OCI-LY7 (cell line): ENCODE measurements at regions of chr6 and their contacts with region 1.

Region 1: GRCh38 chr6:32838114-32838958 is at the start of gene TAP2:
- DNase-seq: peak; percentile 96
- H3K4me3 ChIP-seq: peak within 1 kb of the TSS; percentile 97
- H3K27ac ChIP-seq: peak within 1 kb of the TSS; percentile 67
- H3K4me1 ChIP-seq: peaks cover 55% of the 10 kb centered on the region
- CTCF ChIP-seq: peak; percentile 95
- total RNA-seq, gene TAP2: 90.9 and 96.4 TPM in 2 replicates

Region 2: DNA sequence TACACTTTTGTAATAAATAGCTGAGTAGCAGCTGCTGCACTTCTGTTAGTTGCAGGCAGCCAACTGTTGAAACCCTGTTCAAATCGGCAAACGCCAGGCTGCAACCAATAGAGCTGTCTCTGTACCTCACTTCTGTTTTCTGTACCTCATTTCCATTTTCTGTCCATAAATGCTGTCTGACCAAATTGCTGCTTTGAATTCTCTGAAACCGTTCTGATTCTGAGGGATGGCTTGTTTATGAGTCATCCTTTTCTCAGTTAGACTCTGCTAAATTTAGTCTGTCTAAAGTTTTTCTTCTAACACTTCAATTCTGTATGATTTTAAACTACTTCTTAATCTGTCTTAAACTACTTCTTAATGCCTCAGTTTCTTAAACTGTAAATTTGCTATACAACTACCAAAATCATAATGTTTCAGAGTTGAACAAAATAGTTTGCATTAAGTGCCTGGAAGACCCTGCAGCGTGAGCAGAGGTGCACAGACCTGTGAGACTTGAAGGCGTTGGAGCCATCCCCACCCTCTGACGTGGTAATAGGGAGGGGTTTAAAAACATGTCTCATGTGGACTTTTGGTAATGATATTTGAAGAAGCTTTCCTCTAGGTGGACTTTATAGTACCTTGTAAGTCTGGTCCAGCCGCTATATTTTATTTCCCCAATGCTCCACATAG is 440.9 kb before region 1 on chr6:
- CTCF ChIA-PET with region 1: no interaction called
- POLR2A ChIA-PET with region 1: interaction called, 10 read pairs
- intact Hi-C with region 1: no loop called
- DNase-seq: peak; percentile 80
- H3K4me3 ChIP-seq: peak overlapping the region; percentile 22
- H3K27ac ChIP-seq: peak overlapping the region; percentile 86
- H3K4me1 ChIP-seq: peaks cover 66% of the 10 kb centered on the region
- CTCF ChIP-seq: no peak

Region 3: DNA sequence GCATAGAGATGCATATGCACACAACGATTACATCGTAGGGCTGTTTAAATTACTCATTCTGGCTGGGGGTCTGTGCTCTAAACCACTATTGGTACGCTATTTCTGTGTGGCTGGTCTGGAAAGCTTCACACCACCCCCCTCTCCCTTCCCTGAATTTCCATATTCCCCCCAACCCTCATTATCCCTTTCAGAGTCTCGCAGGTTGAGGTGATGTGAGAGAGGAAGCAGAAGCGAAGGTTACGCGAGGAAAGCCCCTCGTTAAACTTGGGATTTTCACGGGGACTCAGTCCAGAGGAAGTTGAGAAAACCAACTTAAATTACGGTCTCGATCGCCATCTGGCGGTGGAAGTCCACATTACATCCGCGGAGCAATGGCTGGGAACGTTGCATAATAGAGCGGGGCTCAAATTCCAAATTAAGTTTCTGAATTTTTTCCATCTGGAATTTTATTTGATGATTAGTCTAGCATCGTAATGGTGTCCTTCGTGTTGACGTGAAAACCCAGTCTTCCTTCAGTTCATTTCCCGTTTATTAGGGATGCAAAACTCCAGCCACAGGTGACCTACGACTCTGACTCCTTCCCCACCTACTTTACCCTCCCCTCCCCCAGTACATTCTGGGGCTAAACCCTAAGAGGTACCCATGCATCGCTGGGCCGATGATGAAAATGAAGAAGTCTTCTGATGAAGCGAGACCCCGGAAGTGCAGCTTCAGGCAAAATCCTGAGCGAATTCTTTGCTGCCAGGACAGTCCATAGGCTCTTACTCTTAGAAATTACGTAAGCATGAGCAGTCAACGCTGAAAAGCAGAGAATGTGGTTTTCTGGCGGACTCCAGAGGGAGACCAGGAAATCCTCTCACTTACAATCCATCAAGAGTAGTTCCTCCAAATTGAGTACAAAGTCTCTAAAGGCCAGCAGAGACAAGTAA is 41.2 kb before region 1 on chr6:
- CTCF ChIA-PET with region 1: no interaction called
- POLR2A ChIA-PET with region 1: interaction called, 8 read pairs
- intact Hi-C with region 1: loop called (anchors 1 kb)
- DNase-seq: peak; percentile 85
- H3K4me3 ChIP-seq: peak overlapping the region; percentile 44
- H3K27ac ChIP-seq: peak overlapping the region; percentile 57
- H3K4me1 ChIP-seq: peaks cover 34% of the 10 kb centered on the region
- CTCF ChIP-seq: peak; percentile 97

Region 4: DNA sequence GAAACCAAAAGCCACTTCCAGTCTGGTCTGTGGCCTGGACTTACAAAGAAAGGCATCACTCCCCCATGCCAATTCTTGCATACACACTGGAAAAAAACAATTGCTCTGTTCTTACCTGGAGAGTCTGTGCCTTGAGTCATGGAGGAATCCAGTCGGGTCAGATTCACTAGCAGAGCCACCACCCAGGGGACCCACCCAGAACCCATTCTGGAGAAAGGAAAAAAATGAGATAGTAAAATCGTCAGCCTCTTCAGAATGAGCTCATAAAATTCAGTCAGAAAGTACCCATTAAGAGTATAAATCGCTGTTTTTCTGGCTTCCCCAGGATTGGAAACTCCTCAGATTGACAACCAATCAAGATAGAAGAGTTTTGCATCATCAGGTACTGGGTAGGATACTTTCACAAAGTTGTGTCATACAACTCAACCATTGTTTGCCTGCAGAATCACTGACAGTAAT is 21.6 kb before region 1 on chr6 and contains the start of gene HLA-DOB:
- CTCF ChIA-PET with region 1: no interaction called
- POLR2A ChIA-PET with region 1: interaction called, 11 read pairs
- intact Hi-C with region 1: no loop called
- DNase-seq: peak; percentile 86
- H3K4me3 ChIP-seq: peak within 1 kb of the TSS; percentile 69
- H3K27ac ChIP-seq: peak within 1 kb of the TSS; percentile 97
- H3K4me1 ChIP-seq: peaks cover 92% of the 10 kb centered on the region
- CTCF ChIP-seq: no peak
- total RNA-seq, gene HLA-DOB: 46.5 and 48.1 TPM in 2 replicates

Region 5: GRCh38 chr6:32853541-32854375 is 15.4 kb after region 1 on chr6 and contains the starts of genes PSMB9 and TAP1:
- CTCF ChIA-PET with region 1: interaction called, 17 read pairs
- POLR2A ChIA-PET with region 1: interaction called, 88 read pairs
- intact Hi-C with region 1: loop called (anchors 1 kb)
- DNase-seq: peak; percentile 94
- H3K4me3 ChIP-seq: peak within 1 kb of the TSS; percentile 83
- H3K27ac ChIP-seq: peak within 1 kb of the TSS; percentile 83
- H3K4me1 ChIP-seq: peaks cover 58% of the 10 kb centered on the region
- CTCF ChIP-seq: peak; percentile 81
- total RNA-seq, gene PSMB9: 149 and 158 TPM in 2 replicates
- total RNA-seq, gene TAP1: 62.1 and 85.9 TPM in 2 replicates

Region 6: GRCh38 chr6:32947552-32948465 is 109.5 kb after region 1 on chr6:
- CTCF ChIA-PET with region 1: interaction called, 13 read pairs
- POLR2A ChIA-PET with region 1: interaction called, 3 read pairs
- intact Hi-C with region 1: loop called (anchors 2 kb)
- DNase-seq: peak; percentile 73
- H3K4me3 ChIP-seq: peak overlapping the region; percentile 75
- H3K27ac ChIP-seq: peak overlapping the region; percentile 99
- H3K4me1 ChIP-seq: peaks cover 84% of the 10 kb centered on the region
- CTCF ChIP-seq: peak; percentile 97